ENCODE measurements at regions of chr6 and their contacts with region 1.

Region 1: GRCh38 chr6:2999618-3000557 is at the start of gene NQO2:
- DNase-seq: peak; percentile 76
- ATAC-seq: peak; percentile 79
- H3K4me3 ChIP-seq: peak within 1 kb of the TSS; percentile 91 to 100 (median 100)
- H3K27ac ChIP-seq: peak within 1 kb of the TSS; percentile 92
- H3K4me1 ChIP-seq: peaks cover 44% of the 10 kb centered on the region
- H3K27me3 ChIP-seq: no peaks in the 10 kb centered on the region; a peak in 1 of 5 replicates
- CTCF ChIP-seq: peak; percentile 27; the same call in 1 of the 2 replicates
- EP300 ChIP-seq: 0 out of 4 replicates have a peak, but pooled peaks of 1 of the 2 experiments have one; percentile 14
- POLR2A ChIP-seq: peak; percentile 95 to 98
- RAD21 ChIP-seq: peak; percentile 58
- total RNA-seq, gene NQO2: 56.5 and 63.0 TPM in 2 replicates

Region 2: DNA sequence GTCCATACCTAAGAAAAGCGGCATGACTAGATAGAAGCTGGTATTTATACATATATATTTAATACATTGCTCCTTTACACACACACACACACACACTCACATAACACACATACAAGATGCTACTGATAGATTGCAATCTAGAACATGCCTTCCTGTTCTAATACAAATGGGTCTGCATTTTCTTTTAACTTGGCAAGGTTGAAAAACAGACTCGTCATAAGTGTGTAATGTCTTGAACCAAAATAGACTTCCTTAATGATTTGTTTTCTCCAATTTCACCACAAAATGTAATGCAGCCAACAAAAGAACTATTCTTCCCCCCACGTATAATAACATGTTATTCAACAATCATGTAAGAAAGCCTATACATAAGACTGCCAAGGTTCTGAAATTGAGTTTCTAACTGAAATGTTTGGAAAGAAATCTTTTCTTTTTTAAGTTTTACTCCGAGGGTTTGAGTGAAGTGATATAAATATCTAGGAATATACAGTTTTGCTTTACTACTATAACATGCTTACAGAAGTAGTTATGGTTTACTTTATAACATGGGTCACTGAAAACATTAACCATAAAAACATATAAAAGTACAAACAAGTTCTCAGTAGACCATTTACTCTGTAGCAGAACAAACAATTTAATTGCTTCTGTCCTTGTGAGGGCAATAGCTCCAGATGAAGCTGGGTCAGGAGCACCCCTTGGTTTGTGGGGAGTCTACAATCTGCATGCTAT is 1182.7 kb before region 1 on chr6:
- CTCF ChIA-PET with region 1: no interaction called
- POLR2A ChIA-PET with region 1: no interaction called
- in situ Hi-C with region 1: no loop called
- intact Hi-C with region 1: no loop called
- DNase-seq: no peak
- ATAC-seq: no peak
- H3K4me3 ChIP-seq: no peak overlapping the region
- H3K27ac ChIP-seq: no peak overlapping the region
- H3K4me1 ChIP-seq: peaks cover 26% of the 10 kb centered on the region
- H3K27me3 ChIP-seq: no peaks in the 10 kb centered on the region
- CTCF ChIP-seq: no peak
- EP300 ChIP-seq: no peak
- POLR2A ChIP-seq: no peak
- RAD21 ChIP-seq: no peak

Region 3: GRCh38 chr6:2866181-2866846 is 133.6 kb before region 1 on chr6:
- CTCF ChIA-PET with region 1: no interaction called
- POLR2A ChIA-PET with region 1: no interaction called
- in situ Hi-C with region 1: no loop called
- intact Hi-C with region 1: no loop called
- DNase-seq: no peak
- ATAC-seq: no peak
- H3K4me3 ChIP-seq: peak overlapping the region in 1 of 3 experiments; percentile 16; a peak in 1 of 6 replicates
- H3K27ac ChIP-seq: no peak overlapping the region
- H3K4me1 ChIP-seq: peaks cover 61% of the 10 kb centered on the region
- H3K27me3 ChIP-seq: no peaks in the 10 kb centered on the region
- CTCF ChIP-seq: no peak
- EP300 ChIP-seq: no peak
- POLR2A ChIP-seq: no peak
- RAD21 ChIP-seq: no peak

Region 4: DNA sequence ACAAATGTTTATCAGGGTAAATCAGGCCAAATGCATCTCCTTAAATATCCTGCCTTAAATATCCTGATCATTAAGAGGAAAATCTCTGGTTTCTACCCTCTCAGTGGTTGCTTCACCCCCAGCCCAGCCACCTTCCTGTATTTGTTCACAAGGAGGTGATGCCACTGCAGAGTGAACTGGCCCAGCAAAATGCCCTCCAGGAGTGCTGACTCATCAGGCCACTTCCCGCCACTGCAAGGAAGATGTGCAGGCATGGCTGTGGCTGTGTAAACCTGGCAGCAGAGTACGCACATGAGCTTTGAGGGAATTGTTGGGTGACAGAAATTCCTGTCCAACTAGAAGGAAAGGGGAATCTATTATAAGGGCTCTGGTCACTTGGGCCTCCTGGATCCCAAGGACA is 13.6 kb after region 1 on chr6:
- CTCF ChIA-PET with region 1: no interaction called
- POLR2A ChIA-PET with region 1: interaction called, 15 read pairs
- in situ Hi-C with region 1: no loop called
- intact Hi-C with region 1: no loop called
- DNase-seq: no peak
- ATAC-seq: peak; percentile 48; the same call in 2 of the 3 replicates
- H3K4me3 ChIP-seq: no peak overlapping the region
- H3K27ac ChIP-seq: no peak overlapping the region
- H3K4me1 ChIP-seq: peaks cover 27% of the 10 kb centered on the region
- H3K27me3 ChIP-seq: no peaks in the 10 kb centered on the region
- CTCF ChIP-seq: no peak
- EP300 ChIP-seq: no peak
- POLR2A ChIP-seq: no peak
- RAD21 ChIP-seq: no peak

Region 5: DNA sequence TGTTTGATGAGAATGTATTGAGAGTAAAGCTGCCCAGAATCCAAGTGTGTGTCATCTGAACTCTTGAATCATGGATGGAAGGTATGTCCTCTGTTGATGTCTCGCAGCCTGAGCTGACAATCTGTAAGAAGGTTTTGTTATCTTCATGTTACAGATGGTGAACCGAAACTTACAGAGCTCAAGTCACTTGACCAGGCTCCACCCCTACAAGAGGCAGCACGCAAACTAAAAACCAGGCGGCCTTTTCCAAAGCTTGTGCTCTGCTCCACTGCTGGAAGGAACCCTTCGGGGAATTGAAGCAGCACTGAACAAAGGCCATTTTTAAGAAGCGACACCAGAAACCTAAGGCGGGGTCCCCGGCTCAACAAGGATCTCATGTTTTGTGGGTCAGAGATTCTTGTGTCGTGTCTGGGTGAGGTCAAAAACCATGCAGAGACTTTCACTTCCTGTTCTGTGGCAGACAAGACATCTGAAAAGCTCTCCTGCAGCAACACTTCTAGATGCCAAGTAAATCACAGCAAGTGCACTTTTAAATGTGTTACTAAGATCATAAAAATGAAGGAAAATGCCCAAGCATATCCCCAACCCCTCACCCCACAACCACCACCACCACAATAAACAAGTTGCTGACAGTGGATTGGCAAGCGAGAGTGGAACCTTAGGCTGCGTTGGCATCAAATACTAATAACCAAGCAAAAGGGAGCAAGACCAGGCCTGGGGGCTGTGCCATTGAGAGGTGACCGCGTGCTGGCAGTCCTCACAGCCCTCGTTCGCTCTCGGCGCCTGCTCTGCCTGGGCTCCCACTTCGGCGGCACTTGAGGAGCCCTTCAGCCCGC is 27.1 kb after region 1 on chr6:
- CTCF ChIA-PET with region 1: no interaction called
- POLR2A ChIA-PET with region 1: interaction called, 18 read pairs
- in situ Hi-C with region 1: no loop called
- intact Hi-C with region 1: no loop called
- DNase-seq: no peak
- ATAC-seq: no peak
- H3K4me3 ChIP-seq: no peak overlapping the region
- H3K27ac ChIP-seq: no peak overlapping the region
- H3K4me1 ChIP-seq: peaks cover 29% of the 10 kb centered on the region
- H3K27me3 ChIP-seq: no peaks in the 10 kb centered on the region
- CTCF ChIP-seq: no peak
- EP300 ChIP-seq: no peak
- POLR2A ChIP-seq: no peak
- RAD21 ChIP-seq: no peak

Region 6: DNA sequence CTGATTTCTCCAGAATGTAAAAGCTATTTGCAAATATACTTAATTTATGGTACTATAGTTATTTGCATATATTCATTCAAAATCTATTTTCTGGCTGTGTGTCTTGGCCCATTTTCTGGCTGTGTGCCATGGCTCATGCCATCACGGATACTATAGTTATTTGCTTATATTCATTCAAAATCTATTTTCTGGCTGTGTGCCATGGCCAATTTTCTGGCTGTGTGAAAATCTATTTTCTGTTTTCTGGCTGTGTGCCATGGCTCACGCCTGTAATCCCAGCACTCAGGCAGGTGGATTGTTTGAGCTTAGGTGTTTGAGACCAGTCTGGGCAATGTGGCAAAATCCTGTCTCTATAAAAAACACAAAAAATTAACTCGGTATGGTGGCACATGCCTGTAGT is 39.5 kb after region 1 on chr6:
- CTCF ChIA-PET with region 1: no interaction called
- POLR2A ChIA-PET with region 1: interaction called, 8 read pairs
- in situ Hi-C with region 1: no loop called
- intact Hi-C with region 1: loop called (anchors 5 kb)
- DNase-seq: no peak
- ATAC-seq: no peak
- H3K4me3 ChIP-seq: no peak overlapping the region
- H3K27ac ChIP-seq: no peak overlapping the region
- H3K4me1 ChIP-seq: peaks cover 13% of the 10 kb centered on the region
- H3K27me3 ChIP-seq: peaks cover 2 to 33% of the 10 kb centered on the region in 2 experiments; a peak in 4 of 5 replicates
- CTCF ChIP-seq: no peak
- EP300 ChIP-seq: no peak
- POLR2A ChIP-seq: no peak
- RAD21 ChIP-seq: no peak

Region 7: DNA sequence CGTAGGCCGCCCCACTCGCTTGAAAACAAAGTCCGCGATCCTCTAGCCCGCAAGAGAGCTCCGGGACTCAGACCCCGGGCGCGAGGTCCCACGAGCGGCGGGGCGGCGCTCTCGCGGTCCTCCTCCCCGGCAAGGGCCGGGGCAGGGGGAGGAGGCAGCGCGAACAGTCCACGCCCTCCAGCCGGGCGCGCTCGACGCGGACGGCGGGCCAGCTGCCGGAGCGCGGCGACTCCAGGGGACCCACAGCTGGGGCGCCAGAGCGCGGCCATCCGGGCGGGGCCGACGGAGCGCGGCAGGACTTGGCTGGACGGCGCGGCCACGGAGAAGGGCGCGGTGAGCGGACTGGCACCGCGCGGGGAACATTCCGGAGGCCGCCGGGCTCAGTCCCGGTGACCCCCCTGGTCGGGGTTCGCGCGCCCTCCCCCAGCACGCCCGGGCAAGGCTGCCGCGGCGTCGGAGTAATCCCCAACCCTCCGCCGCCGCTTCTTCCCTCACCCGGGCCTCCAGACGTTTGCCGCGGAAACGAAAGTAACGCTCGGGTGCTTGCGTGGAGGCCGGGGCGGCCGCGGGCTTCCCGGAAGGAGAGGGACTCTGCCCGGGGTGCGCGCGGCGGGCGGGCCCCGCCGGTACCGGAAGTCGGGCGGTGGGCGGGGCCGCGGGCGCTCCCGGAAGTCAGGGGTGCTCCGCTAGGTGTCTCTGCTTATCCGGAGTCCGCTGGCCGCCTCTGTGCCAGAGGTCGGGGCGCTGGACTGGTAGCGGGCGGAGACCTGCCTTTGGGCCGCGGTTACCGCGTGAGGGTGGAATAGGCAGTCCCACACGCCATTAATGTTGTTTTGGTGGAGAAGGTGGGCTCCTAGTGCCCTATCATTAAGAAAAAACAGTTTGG is 68.7 kb after region 1 on chr6 and contains the start of gene RIPK1:
- CTCF ChIA-PET with region 1: no interaction called
- POLR2A ChIA-PET with region 1: interaction called, 22 read pairs
- in situ Hi-C with region 1: no loop called
- intact Hi-C with region 1: no loop called
- DNase-seq: peak; percentile 89
- ATAC-seq: peak; percentile 82
- H3K4me3 ChIP-seq: peak within 1 kb of the TSS; percentile 92 to 99 (median 97)
- H3K27ac ChIP-seq: peak within 1 kb of the TSS; percentile 99
- H3K4me1 ChIP-seq: peaks cover 54% of the 10 kb centered on the region
- H3K27me3 ChIP-seq: no peaks in the 10 kb centered on the region; a peak in 1 of 5 replicates
- CTCF ChIP-seq: peak; percentile 80
- EP300 ChIP-seq: no peak; a peak in 1 of 4 replicates
- POLR2A ChIP-seq: peak; percentile 76 to 94
- RAD21 ChIP-seq: peak; percentile 70
- total RNA-seq, gene RIPK1: 10.3 and 15.0 TPM in 2 replicates

Region 8: DNA sequence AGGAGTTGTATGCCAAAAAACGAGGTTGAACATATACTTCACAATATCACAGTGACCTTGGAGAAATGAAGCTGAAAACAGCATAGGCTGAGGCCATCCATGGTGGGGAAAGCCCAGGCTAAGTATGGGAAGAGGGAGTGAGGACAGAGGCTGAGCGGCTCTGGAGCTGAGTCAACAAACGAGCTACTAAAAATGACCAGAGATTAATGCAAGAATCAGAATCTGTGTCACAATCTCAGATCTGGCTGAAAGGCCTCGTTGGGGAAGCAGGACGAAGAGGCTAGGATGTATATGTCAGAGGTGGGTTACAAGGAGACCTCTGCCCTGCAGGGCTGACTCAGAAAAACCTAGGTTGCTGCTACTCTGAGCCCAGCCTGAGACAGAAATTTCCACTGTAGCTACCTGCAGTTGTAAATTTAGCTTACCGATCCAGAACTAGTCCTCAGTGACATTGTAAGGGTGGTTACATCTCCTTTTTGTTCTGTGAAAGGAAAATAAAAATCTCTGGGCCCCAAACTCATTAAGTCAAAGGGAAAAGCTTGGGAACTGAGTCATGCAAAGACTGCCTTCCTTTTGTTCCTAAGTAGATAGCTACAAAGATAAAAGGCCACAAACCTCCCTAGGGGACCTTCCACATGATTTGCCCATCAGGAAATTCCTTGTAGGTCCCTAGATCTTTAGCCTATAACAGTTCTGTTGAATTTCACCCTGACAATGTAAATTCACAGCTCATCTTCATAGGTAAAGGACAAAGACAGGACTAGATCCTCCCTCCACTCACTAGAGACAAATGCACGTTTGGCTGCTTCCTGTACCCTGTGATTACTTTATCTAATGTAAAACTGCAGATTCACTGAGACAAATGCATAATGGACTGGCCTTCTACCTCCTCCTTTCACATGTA is 166.0 kb after region 1 on chr6:
- CTCF ChIA-PET with region 1: no interaction called
- POLR2A ChIA-PET with region 1: no interaction called
- in situ Hi-C with region 1: no loop called
- intact Hi-C with region 1: no loop called
- DNase-seq: peak; percentile 18
- ATAC-seq: no peak
- H3K4me3 ChIP-seq: no peak overlapping the region
- H3K27ac ChIP-seq: no peak overlapping the region
- H3K4me1 ChIP-seq: peaks cover 41% of the 10 kb centered on the region
- H3K27me3 ChIP-seq: no peaks in the 10 kb centered on the region
- CTCF ChIP-seq: no peak
- EP300 ChIP-seq: no peak
- POLR2A ChIP-seq: no peak
- RAD21 ChIP-seq: no peak

Measured in HepG2 (cell line).